Ascending aorta (tissue), 2 donors: ENCODE measurements at regions of chr12 and their contacts with region 1.

Region 1: DNA sequence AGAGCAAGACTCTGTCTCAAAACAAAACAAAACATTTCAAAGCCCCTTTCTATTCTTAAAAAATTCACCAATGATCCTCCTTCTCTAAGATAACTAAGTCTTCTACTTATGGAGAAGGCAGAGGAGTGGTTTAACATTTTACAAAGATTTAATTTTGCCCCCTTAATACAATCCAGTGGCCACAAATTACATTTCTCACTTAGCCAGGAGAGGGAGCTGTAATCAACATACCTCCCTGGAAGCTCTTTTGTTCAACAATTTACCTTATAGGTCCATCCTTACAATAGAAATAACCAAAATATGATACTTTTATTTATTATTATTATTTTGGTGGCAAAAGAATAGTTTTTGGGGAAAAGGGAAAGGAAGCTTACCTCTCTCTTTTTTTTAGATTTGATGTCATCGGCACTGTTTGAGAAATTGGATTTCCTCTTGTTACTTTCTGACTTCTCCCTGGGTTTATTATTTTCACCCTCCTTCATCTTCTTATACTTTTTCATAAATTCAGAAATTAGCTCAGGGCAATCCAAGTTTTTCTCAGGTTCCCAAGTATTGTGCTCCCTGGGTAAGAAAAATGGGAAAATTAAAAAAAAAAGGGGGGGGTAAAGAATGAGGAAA is 28.1 kb downstream of the CBX5 start:
- DNase-seq: no peak
- H3K4me3 ChIP-seq: no peak overlapping the region
- H3K27ac ChIP-seq: no peak overlapping the region
- H3K4me1 ChIP-seq: peaks cover 0 to 2% of the 10 kb centered on the region in 2 donors
- H3K27me3 ChIP-seq: no peaks in the 10 kb centered on the region
- CTCF ChIP-seq: peak; percentile 29 to 51 (median 43)

Region 2: DNA sequence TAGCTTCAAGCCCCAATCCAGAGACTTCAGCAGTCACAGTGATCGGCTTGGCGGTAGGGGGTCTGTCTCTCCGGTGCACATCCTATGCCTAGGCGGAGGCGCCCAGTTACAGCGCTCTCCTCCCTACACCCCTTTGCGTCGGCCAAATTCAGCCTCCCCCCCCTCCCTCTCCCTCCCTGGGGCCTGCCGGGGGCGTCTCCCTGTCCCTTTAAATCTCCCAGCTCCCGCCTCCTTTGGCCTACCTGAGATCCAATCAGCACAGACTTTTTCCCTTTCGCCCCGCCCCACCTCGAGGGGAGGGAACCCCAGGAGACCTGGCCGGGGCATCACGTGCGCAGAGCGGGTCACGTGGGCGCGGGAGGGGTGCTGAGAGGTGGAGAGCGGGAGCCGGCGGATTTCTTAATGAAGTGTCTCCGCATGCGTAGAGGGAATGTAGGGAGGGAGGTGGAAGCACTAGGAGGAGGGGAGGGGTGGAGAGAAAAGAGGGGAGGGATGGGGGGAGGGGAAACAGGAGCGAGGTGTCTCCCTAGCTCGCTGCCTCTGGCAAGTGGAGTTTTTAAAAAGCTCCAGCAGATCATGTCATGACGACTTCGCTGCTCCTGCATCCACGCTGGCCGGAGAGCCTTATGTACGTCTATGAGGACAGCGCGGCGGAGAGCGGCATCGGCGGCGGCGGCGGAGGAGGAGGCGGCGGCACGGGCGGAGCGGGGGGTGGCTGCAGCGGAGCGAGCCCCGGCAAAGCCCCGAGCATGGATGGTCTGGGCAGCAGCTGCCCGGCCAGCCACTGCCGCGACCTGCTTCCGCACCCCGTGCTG is 313.2 kb before region 1 on chr12 and contains the start of gene HOXC13:
- intact Hi-C with region 1: no loop called
- DNase-seq: no peak
- H3K4me3 ChIP-seq: peak within 1 kb of the TSS in 1 of 2 donors; percentile 11
- H3K27ac ChIP-seq: no peak within 1 kb of the TSS
- H3K4me1 ChIP-seq: peaks cover 2 to 12% of the 10 kb centered on the region in 2 donors
- H3K27me3 ChIP-seq: peaks cover 59% of the 10 kb centered on the region
- CTCF ChIP-seq: no peak
- total RNA-seq, gene HOXC13: not detected

Region 3: DNA sequence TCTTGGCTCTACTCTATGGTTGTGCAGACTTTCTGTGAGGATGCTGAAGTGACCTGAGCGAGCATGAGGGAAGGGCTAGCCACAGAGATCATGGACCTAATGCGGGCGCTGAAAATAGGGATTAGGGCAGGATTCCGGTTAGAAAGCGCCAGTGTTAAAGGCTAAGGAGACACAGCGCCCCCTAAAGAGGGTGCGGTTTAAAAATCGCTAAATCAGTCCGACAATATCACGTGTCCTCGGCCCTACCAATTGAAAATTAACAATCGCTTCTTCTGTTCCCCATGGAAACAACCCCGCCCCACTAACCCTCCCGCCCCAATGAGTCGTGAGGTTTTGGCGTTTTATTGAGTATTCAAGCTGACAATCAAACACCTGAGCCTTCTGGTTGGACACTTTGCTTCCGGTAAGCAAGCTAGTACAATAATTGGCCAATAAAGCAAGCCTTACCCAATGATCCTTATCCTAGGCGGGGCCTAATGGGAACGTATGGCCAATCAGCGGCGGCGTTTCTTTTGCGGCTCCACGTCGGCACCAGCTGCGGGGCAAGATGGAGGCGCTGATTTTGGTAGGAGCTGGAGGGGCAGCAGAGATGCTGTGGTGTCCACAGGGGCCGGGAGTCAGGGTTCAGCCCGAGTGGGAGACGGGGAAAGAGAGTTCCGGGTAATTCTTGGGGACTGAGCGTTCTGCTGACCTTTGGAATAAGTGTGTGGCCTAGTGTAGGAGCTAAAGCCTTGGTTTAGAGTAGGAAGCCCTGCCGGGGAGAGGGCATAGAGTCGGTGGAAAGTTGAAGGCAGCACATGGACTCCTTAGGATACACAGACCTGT is 73.1 kb after region 1 on chr12 and contains the start of gene COPZ1:
- intact Hi-C with region 1: loop called (anchors 2 kb)
- DNase-seq: peak; percentile 97 to 99
- H3K4me3 ChIP-seq: peak within 1 kb of the TSS; percentile 64 to 65
- H3K27ac ChIP-seq: peak within 1 kb of the TSS; percentile 64 to 78
- H3K4me1 ChIP-seq: peaks cover 6 to 26% of the 10 kb centered on the region in 2 donors
- H3K27me3 ChIP-seq: no peaks in the 10 kb centered on the region
- CTCF ChIP-seq: peak; percentile 61 to 72 (median 67)
- total RNA-seq, gene COPZ1: 60.3 TPM